ENCODE measurements at regions of chr1 and their contacts with region 1.

Region 1: GRCh38 chr1:18100491-18101063 is 7.0 kb upstream of the IGSF21 start:
- DNase-seq: peak in 4 of 5 donors; percentile 26 to 57 (median 40)
- ATAC-seq: peak; percentile 34 to 62 (median 52)
- H3K4me3 ChIP-seq: no peak overlapping the region
- H3K27ac ChIP-seq: no peak overlapping the region
- H3K4me1 ChIP-seq: no peaks in the 10 kb centered on the region
- H3K27me3 ChIP-seq: peaks cover 0 to 46% (median 12%) of the 10 kb centered on the region in 9 donors
- CTCF ChIP-seq: peak; percentile 58 to 78 (median 70)
- POLR2A ChIP-seq: no peak

Region 2: GRCh38 chr1:17929224-17929623 is 171.4 kb before region 1 on chr1:
- intact Hi-C with region 1: loop called in 5 of 10 experiments (anchors 5 kb)
- DNase-seq: no peak
- ATAC-seq: no peak
- H3K4me3 ChIP-seq: no peak overlapping the region
- H3K27ac ChIP-seq: no peak overlapping the region
- H3K4me1 ChIP-seq: peaks cover 0 to 15% (median 6%) of the 10 kb centered on the region in 12 donors
- H3K27me3 ChIP-seq: peaks cover 0 to 14% (median 0%) of the 10 kb centered on the region in 9 donors
- CTCF ChIP-seq: no peak
- POLR2A ChIP-seq: no peak